Activated T-helper 1 cell treated with anti-CD3 and anti-CD28 coated beads, Interleukin-12 subunit alpha, Interleukin-12 subunit beta, Interleukin-2, Interleukin-4 antibody, amounts not matched to agents 30 ng/mL and 10 ng/mL and 1 ng/mL, durations not matched to agents 14 hours and 24 hours and 36 hours (primary cell): ENCODE measurements at regions of chr18 and their contacts with region 1.

Region 1: GRCh38 chr18:58615140-58616132 is 13.5 kb downstream of the ALPK2 start:
- DNase-seq: peak; percentile 71
- H3K4me3 Mint-ChIP-seq: peak overlapping the region; percentile 63
- H3K27ac Mint-ChIP-seq: peak overlapping the region; percentile 96
- H3K4me1 Mint-ChIP-seq: peaks cover 41% of the 10 kb centered on the region
- H3K27me3 Mint-ChIP-seq: peaks cover 8% of the 10 kb centered on the region

Region 2: DNA sequence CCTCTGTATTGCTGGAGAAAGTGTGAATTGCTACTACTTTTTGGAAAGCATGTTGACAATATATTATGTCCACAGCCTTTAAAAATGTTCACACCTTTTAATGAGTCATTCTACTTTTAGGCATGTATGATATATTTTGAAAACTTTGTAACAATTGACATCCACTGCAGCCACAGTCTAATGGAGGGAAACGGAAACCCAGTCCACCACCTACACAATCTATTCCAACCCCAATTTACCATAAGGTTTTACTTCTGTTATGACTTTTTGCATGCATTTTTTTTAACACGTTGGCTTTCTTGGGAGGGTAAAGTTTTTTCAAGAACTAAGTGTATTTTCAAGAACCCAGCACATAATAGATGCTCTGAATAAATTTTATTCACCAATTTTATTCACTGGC is 773.9 kb before region 1 on chr18:
- intact Hi-C with region 1: loop called (anchors 5 kb)
- DNase-seq: peak; percentile 3
- H3K4me3 Mint-ChIP-seq: peak overlapping the region; percentile 24
- H3K27ac Mint-ChIP-seq: peak overlapping the region; percentile 55
- H3K4me1 Mint-ChIP-seq: peaks cover 30% of the 10 kb centered on the region
- H3K27me3 Mint-ChIP-seq: peaks cover 31% of the 10 kb centered on the region

Region 3: DNA sequence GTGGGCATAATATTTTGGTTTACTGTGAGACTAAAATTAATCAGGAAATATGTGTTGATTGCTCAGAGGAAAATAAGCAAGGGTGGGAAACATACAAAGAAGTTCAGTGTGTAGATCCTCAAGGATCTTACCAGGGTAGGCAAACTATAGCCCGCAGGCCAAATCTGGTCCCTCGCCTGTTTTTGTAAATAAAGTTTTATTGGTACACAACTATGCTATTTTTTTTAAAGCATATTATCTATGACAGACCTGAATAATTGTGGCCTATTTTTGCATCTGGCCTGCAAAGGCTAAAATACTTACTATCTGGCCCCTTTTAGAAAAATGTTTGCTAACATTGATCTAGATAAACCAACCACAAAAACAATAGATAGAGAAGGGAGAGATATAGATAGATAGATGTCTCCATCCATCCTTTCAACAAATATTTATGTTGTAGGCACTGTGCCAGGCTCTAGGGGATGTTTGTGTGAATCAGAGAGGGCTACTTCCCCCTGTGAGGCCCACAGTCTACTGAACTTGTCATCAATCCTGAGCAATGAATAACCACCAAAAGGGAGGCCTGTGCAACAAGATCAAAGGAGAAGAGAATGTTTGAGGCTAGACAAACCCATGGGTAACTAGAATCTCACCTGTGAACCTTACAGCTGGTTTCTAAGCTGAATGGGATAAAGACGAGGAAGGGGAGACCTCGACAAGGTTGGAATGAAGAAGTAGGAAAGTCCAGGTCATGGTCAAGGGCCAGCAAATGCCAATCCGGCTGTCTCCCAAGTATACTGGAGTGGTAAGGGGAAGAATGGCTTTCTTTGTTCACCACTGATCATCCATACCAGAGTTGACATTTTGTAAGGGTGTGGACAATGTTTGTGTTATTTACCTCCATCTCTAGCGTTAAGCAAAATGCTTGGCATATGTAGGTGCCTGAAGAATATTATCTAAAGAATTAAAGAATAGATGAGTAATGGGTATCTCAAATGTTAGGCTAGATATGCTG is 10.1 kb before region 1 on chr18:
- intact Hi-C with region 1: loop called (anchors 1 kb)
- DNase-seq: no peak
- H3K4me3 Mint-ChIP-seq: no peak overlapping the region
- H3K27ac Mint-ChIP-seq: peak overlapping the region; percentile 37
- H3K4me1 Mint-ChIP-seq: peaks cover 37% of the 10 kb centered on the region
- H3K27me3 Mint-ChIP-seq: peaks cover 4% of the 10 kb centered on the region

Region 4: GRCh38 chr18:58639751-58640427 is 24.5 kb after region 1 on chr18:
- intact Hi-C with region 1: loop called (anchors 1 kb)
- DNase-seq: no peak
- H3K4me3 Mint-ChIP-seq: no peak overlapping the region
- H3K27ac Mint-ChIP-seq: no peak overlapping the region
- H3K4me1 Mint-ChIP-seq: peaks cover 33% of the 10 kb centered on the region
- H3K27me3 Mint-ChIP-seq: no peaks in the 10 kb centered on the region

Region 5: GRCh38 chr18:58649966-58650816 is 34.8 kb after region 1 on chr18:
- intact Hi-C with region 1: loop called (anchors 1 kb)
- DNase-seq: peak; percentile 73
- H3K4me3 Mint-ChIP-seq: peak overlapping the region; percentile 6
- H3K27ac Mint-ChIP-seq: peak overlapping the region; percentile 69
- H3K4me1 Mint-ChIP-seq: peaks cover 65% of the 10 kb centered on the region
- H3K27me3 Mint-ChIP-seq: no peaks in the 10 kb centered on the region

Region 6: GRCh38 chr18:58687871-58688308 is 72.5 kb after region 1 on chr18:
- intact Hi-C with region 1: loop called (anchors 1 kb)
- DNase-seq: peak; percentile 68
- H3K4me3 Mint-ChIP-seq: peak overlapping the region; percentile 53
- H3K27ac Mint-ChIP-seq: peak overlapping the region; percentile 83
- H3K4me1 Mint-ChIP-seq: peaks cover 60% of the 10 kb centered on the region
- H3K27me3 Mint-ChIP-seq: no peaks in the 10 kb centered on the region

Region 7: DNA sequence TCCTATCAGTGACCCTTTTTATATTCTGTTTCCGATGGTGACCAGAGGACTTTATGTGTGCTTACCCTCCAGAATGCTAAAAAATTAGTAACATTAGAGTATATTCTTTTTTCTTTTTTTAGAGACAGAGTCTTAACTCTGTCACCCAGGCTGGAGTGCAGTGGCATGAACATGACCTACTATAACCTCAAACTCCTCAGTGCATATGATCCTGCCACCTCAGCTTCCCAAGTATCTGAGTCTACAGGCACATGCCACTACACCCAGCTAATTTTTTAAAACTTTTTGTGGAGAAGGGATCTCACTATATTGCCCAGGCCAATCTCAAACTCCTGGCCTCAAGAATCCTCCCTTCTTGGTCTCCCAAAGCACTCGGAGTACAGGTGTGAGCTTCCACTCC is 130.5 kb after region 1 on chr18:
- intact Hi-C with region 1: no loop called
- DNase-seq: no peak
- H3K4me3 Mint-ChIP-seq: no peak overlapping the region
- H3K27ac Mint-ChIP-seq: no peak overlapping the region
- H3K4me1 Mint-ChIP-seq: no peaks in the 10 kb centered on the region
- H3K27me3 Mint-ChIP-seq: no peaks in the 10 kb centered on the region

Region 8: DNA sequence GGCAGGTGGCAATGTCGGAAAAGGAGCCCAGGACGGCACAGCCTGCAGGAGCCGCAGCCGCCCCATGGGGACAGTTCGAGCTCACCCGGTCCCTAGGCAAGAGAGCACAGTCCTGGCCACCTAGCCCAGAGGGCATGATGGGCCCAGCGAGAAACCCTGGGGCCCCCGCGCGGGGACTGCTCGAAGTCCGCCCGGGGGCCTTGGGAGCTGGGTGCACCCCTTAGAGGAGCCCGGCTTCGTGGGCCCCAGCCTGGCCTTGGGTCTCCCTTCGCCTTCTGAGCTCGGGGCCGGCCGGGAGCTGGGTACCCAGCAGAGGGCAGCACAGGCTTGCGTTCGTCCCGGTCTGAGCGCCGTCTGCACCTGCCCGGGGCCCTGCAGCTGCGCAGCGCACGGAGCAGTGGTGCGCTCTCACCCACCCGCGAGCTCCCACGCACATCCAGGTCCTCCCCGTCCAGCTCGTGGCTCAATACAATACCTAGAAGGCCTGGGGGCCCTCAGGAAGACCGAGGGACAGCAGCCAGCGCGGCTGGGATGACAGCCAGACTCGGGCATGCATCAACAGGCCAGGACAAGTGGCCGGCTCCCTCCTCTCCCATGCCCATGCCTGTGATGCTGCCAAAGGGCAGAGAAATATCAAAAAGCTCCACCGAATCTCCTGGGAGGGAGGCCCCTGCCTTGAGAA is 153.0 kb after region 1 on chr18:
- intact Hi-C with region 1: loop called (anchors 1 kb)
- DNase-seq: peak; percentile 53
- H3K4me3 Mint-ChIP-seq: no peak overlapping the region
- H3K27ac Mint-ChIP-seq: no peak overlapping the region
- H3K4me1 Mint-ChIP-seq: peaks cover 9% of the 10 kb centered on the region
- H3K27me3 Mint-ChIP-seq: peaks cover 49% of the 10 kb centered on the region